ENCODE measurements at regions of chr14 and their contacts with region 1.

Region 1: DNA sequence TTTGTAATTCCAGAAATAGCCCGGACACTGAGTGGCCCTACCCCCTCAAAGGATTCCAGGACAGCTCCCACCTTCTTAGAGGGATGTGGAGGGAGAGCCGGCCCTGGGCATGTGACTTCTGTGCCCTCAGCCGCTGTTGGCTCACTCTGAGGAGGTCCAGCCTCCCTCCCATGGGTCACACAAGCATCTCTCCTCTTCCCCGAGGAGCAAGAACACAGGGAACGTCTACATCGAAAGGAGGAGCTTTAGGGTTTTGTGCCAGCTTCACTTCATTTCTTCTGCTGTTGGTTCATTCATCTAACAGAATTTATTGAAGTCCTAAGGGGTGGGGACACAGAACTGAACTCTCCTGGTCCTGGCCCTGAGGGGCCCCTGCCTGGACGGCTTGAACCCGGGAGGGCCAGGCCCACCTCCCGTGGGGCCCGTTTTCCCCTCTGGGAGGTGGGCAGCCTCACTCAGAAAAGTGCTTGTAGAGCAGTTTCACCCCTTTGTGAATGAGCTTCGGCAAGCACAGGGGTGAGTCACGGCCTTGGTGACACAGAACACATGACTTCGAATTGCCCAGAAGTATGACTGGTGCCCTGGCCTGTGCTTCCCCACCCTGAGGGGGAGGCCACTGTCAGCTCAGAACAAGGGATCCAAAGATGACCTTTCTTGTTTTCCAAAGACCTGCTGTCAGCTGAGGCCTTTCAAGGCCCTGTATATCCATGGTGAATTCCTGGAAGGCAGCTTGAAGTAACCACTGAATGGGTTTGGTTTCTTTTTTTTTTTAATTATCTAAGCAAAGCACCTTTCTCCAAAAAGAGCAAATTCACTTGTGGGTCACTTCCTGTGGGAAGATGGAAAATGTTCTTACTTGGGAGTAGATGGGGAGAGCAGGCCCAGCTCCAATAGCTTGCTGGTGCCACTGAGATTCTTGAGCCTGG is 39.2 kb downstream of the NFKBIA start:
- DNase-seq: peak; percentile 77 to 94 (median 92)
- H3K4me3 ChIP-seq: peak overlapping the region in 1 of 7 experiments; percentile 28
- H3K27ac ChIP-seq: peak overlapping the region; percentile 89 to 91
- H3K4me1 ChIP-seq: peaks cover 18 to 63% (median 59%) of the 10 kb centered on the region in 4 experiments
- H3K27me3 ChIP-seq: no peaks in the 10 kb centered on the region

Region 2: GRCh38 chr14:35261774-35262173 is 103.6 kb before region 1 on chr14:
- CTCF ChIA-PET with region 1: interaction called, 12 read pairs
- POLR2A ChIA-PET with region 1: interaction called, 4 read pairs
- DNase-seq: peak; percentile 53 to 68 (median 67)
- H3K4me3 ChIP-seq: no peak overlapping the region
- H3K27ac ChIP-seq: no peak overlapping the region
- H3K4me1 ChIP-seq: peaks cover 0 to 4% (median 0%) of the 10 kb centered on the region in 4 experiments
- H3K27me3 ChIP-seq: no peaks in the 10 kb centered on the region

Region 3: DNA sequence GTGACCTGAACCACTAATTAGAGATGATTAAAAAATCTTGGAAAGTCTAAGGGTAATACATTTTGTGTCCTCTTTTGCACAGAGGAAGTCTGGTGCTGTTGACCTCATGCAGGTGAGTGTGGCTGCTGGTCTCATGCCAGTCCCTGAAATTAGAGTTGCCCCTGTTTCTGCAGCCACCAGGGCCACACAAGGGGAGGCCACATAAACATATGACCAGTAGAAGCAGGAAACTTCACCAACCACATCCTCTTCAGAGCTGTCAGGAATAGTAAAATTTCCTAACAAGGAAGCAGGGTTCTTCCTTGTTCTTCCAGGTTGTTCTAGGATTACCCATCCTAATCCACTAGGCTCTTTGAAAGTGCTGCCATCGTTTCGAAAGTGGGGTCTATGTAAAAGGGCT is 44.9 kb before region 1 on chr14:
- CTCF ChIA-PET with region 1: interaction called, 10 read pairs
- POLR2A ChIA-PET with region 1: no interaction called
- DNase-seq: peak in 1 of 3 donors; percentile 8
- H3K4me3 ChIP-seq: no peak overlapping the region
- H3K27ac ChIP-seq: peak overlapping the region in 1 of 2 experiments; percentile 25
- H3K4me1 ChIP-seq: peaks cover 2 to 13% (median 9%) of the 10 kb centered on the region in 4 experiments
- H3K27me3 ChIP-seq: no peaks in the 10 kb centered on the region

Region 4: DNA sequence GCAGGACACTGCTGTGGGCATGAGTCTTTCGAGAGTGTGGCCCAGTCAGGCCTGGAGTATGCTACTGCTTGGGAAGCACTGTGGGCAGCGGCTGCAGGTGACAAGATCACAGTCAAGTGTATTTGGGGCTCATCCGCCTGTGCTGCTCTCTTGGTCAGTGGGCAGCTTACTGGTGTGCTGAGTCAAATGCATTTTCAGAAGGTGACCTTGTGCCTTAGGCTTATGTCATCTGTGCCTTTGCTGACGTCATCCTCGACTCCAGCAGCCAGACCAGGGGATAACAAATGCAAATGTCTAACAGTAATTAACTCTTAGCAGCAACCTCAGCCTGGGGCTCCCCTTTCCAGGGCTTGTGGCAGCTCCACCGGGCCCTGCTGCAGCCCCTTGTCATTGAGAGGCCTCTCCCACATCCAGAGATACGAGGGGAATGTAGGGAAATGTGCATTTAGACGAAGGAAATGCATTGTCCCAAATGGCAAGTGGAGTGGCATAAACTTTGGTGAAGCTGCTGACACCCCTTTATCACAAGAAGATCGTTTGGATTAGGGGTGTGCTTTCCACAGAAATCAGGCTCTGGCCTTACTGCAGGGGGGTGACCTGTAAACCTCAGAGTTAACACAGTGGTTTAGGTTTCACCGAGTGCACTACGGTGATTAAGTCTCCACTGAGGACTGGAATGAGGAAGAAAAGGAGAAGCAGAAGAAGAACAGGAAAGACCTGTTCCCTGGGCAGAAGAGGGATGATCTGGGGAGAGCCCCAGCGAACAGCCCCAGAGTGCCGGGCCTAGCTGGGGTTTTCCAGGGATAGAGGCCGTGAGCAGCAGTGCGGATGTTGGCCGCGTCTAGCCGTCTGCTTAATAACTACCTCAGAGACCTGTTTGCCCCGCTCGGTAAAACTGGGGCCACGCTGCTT is 33.5 kb before region 1 on chr14:
- CTCF ChIA-PET with region 1: interaction called, 24 read pairs
- POLR2A ChIA-PET with region 1: interaction called, 10 read pairs
- DNase-seq: peak; percentile 32 to 87 (median 81)
- H3K4me3 ChIP-seq: peak overlapping the region in 1 of 7 experiments; percentile 8
- H3K27ac ChIP-seq: peak overlapping the region in 1 of 2 experiments; percentile 61
- H3K4me1 ChIP-seq: peaks cover 9 to 47% (median 37%) of the 10 kb centered on the region in 4 experiments
- H3K27me3 ChIP-seq: no peaks in the 10 kb centered on the region

Region 5: DNA sequence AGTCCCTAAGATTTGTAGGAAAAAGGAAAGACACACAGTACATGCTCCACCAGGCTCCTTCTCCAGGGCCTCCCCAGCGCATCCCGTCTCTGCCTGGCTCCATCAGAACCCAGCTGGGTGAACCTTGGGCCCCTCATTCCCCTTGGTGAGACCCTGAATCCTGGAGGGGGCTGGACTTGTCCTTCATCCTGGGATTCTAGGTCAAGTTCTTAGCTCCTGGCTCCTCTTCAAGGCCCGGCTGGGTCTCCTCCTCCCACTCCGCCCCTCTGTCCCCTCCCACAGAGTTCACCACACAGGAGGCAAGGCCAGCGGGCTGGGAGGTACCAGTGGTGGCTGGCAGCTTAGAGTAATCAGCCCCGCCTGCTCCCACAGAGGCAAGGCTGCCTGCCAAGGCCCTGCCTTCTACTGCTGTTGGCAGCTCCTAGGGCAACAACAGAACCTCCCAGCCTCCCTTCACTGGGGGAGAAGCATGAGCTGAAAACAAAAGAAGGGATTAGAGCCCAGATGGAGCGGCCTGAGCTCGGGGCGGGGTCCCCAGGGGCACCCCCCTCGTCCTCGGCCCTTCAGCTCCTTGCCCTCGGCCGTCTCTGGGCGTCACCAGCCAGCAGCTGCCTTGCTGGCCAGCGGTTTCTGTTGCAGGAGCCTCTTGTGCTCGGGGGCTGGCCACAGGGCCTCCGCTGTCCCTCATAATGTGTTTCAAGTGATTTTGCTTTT is 23.8 kb before region 1 on chr14:
- CTCF ChIA-PET with region 1: interaction called, 20 read pairs
- POLR2A ChIA-PET with region 1: interaction called, 6 read pairs
- DNase-seq: peak; percentile 86 to 96 (median 95)
- H3K4me3 ChIP-seq: peak overlapping the region in 2 of 7 experiments; percentile 33 to 58
- H3K27ac ChIP-seq: peak overlapping the region; percentile 43 to 76
- H3K4me1 ChIP-seq: peaks cover 10 to 70% (median 64%) of the 10 kb centered on the region in 4 experiments
- H3K27me3 ChIP-seq: no peaks in the 10 kb centered on the region

Region 6: GRCh38 chr14:35352266-35353233 is 12.8 kb before region 1 on chr14:
- CTCF ChIA-PET with region 1: interaction called, 11 read pairs
- POLR2A ChIA-PET with region 1: interaction called, 6 read pairs
- DNase-seq: no peak
- H3K4me3 ChIP-seq: peak overlapping the region in 3 of 7 experiments; percentile 12 to 48 (median 31)
- H3K27ac ChIP-seq: no peak overlapping the region
- H3K4me1 ChIP-seq: peaks cover 10 to 53% (median 40%) of the 10 kb centered on the region in 4 experiments
- H3K27me3 ChIP-seq: no peaks in the 10 kb centered on the region

Region 7: GRCh38 chr14:35573911-35574310 is 208.5 kb after region 1 on chr14:
- CTCF ChIA-PET with region 1: no interaction called
- POLR2A ChIA-PET with region 1: no interaction called
- DNase-seq: no peak
- H3K4me3 ChIP-seq: no peak overlapping the region
- H3K27ac ChIP-seq: no peak overlapping the region
- H3K4me1 ChIP-seq: no peaks in the 10 kb centered on the region
- H3K27me3 ChIP-seq: no peaks in the 10 kb centered on the region